ENCODE measurements at regions of chr17 and their contacts with region 1.

Region 1: GRCh38 chr17:42438600-42439567 is 15.8 kb upstream of the CAVIN1 start:
- DNase-seq: no peak
- H3K27ac ChIP-seq: no peak overlapping the region
- CTCF ChIP-seq: no peak

Region 2: DNA sequence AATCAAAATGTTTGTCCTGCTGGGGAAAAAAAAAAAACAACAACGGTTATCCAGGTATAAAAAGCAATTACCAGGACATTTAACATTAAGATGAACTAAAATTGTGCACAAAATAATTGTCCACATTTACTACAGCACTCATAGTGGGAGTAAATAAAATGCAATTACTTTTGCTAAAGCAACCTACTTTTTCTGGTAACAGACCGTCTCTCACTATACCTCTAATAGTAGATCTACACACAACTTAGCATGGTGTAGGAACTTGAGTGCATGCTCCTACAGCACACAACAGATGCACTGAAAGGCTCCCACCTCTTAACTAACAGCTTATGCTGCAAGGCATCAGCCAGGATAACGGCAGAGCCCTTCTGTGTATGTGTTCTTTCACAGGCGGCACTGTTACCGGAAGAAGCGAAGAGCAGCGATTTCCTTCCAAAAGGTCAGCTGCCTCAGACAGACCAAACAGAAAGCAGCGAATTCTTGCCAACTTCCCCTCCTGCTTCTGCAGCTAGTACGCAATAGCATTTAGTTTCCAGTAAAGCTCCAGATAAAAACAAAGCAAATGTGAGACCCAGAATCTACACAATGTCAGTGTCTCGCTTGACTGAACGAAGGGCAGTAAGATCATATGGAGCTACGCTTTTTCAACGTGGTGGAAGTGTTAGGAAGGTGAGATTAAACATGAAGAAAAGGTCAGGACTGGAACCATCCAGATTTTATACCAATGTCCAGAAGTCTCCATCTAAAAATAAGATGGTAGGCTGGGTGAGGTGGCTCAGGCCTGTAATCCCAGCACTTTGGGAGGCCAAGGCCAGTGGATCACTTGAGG is 190.3 kb before region 1 on chr17:
- CTCF ChIA-PET with region 1: no interaction called
- POLR2A ChIA-PET with region 1: interaction called, 12 read pairs
- DNase-seq: no peak
- H3K27ac ChIP-seq: no peak overlapping the region
- CTCF ChIP-seq: no peak

Region 3: GRCh38 chr17:42618442-42619150 is 179.7 kb after region 1 on chr17:
- CTCF ChIA-PET with region 1: no interaction called
- POLR2A ChIA-PET with region 1: no interaction called
- DNase-seq: peak; percentile 70
- H3K27ac ChIP-seq: peak overlapping the region; percentile 84
- CTCF ChIP-seq: peak; percentile 58